PC-3 (cell line): ENCODE measurements at regions of chr3 and their contacts with region 1.

Region 1: DNA sequence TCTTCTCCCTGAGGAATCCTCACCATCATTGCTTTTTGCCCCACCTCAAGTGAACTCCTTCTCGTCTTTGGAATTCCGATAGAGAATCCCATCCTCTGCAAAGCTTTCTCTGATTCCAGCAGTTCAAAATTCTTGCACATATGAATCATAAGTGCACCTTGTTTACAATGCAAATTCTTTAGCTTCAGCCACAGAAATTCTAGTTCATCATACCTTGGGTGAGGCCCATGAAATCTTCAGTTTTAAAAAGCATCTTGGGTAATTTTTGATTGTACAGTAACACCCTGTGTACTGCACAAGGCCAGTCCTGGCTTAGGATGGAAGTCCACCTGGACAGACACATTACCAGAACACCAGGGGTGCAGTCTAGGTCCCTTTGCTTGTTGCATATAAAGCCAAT is 30.8 kb downstream of the MDFIC2 start:
- DNase-seq: peak; percentile 84
- ATAC-seq: peak; percentile 91
- H3K4me3 ChIP-seq: 0 out of 2 replicates have a peak overlapping the region, but pooled peaks have one; percentile 18
- H3K27ac ChIP-seq: peak overlapping the region; percentile 46
- H3K4me1 ChIP-seq: peaks cover 16% of the 10 kb centered on the region
- H3K27me3 ChIP-seq: no peaks in the 10 kb centered on the region
- CTCF ChIP-seq: no peak

Region 2: DNA sequence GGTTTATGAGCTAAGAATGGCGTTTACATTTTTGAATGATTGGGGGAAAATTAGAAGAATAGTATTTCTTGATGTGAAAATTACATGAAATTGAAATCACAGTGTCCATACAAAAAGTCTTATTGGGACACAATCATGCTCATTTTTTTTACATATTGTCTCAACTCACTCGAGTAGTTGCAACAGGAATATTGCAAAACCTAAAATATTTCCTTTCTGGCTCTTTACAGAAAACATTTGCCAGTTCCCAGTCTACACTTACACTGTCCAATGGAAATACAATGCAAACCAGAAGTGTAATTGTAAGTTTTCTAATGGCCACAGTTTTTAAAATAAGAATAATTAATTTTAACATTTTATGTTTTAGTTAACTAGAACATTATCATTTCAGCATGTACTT is 144.3 kb before region 1 on chr3:
- CTCF ChIA-PET with region 1: no interaction called
- POLR2A ChIA-PET with region 1: no interaction called
- intact Hi-C with region 1: loop called (anchors 10 kb)
- DNase-seq: no peak
- ATAC-seq: no peak
- H3K4me3 ChIP-seq: no peak overlapping the region
- H3K27ac ChIP-seq: no peak overlapping the region
- H3K4me1 ChIP-seq: peaks cover 17% of the 10 kb centered on the region
- H3K27me3 ChIP-seq: no peaks in the 10 kb centered on the region
- CTCF ChIP-seq: no peak

Region 3: GRCh38 chr3:70249509-70250160 is 32.0 kb before region 1 on chr3:
- CTCF ChIA-PET with region 1: no interaction called
- POLR2A ChIA-PET with region 1: no interaction called
- intact Hi-C with region 1: loop called (anchors 2 kb)
- DNase-seq: peak; percentile 79
- ATAC-seq: peak; percentile 89
- H3K4me3 ChIP-seq: no peak overlapping the region
- H3K27ac ChIP-seq: peak overlapping the region; percentile 87
- H3K4me1 ChIP-seq: peaks cover 25% of the 10 kb centered on the region
- H3K27me3 ChIP-seq: no peaks in the 10 kb centered on the region
- CTCF ChIP-seq: no peak